AG04449 (cell line): ENCODE measurements at regions of chr22 and their contacts with region 1.

Region 1: GRCh38 chr22:50030297-50031188 is 18.0 kb upstream of the IL17REL start:
- DNase-seq: no peak
- H3K4me3 ChIP-seq: no peak overlapping the region
- CTCF ChIP-seq: peak; percentile 94

Region 2: DNA sequence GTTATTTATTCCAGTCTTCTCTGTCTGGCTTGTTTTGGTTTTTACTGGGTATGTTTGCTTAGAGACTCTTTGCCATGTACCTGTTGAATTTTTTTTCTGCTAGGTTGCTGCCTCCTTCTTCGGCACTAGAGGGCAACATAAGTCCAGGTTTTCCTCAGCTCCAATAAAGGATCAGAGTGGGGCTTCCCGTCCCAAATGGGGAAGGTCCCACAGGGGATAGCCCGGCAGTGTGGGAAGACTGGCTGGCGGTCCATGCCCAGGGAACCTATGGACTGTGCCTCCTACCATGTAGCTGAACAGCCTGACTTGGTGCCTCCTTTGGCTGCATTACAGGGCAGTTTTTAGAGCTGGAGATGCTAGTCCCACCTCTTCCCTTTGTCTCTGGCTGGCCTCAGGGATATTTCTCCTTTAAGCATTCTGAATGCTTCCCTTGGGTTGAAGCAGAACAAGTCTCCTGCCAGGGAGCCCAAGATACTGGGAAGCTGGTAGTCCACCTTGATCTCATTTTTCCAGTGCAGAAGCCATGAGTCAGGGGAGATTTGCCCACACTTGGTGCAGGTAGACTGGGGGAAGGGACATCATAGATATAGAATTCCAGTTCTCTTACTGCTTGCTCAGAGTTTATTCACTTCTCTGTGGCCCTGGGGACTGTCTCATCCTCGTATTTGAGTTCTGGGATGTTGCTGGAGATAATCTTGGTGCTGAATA is 263.0 kb before region 1 on chr22:
- CTCF ChIA-PET with region 1: interaction called, 15 read pairs
- POLR2A ChIA-PET with region 1: no interaction called
- DNase-seq: no peak
- H3K4me3 ChIP-seq: no peak overlapping the region
- CTCF ChIP-seq: peak; percentile 55

Region 3: GRCh38 chr22:49925525-49926128 is 104.9 kb before region 1 on chr22:
- CTCF ChIA-PET with region 1: interaction called, 165 read pairs
- POLR2A ChIA-PET with region 1: no interaction called
- DNase-seq: no peak
- H3K4me3 ChIP-seq: no peak overlapping the region
- CTCF ChIP-seq: no peak

Region 4: DNA sequence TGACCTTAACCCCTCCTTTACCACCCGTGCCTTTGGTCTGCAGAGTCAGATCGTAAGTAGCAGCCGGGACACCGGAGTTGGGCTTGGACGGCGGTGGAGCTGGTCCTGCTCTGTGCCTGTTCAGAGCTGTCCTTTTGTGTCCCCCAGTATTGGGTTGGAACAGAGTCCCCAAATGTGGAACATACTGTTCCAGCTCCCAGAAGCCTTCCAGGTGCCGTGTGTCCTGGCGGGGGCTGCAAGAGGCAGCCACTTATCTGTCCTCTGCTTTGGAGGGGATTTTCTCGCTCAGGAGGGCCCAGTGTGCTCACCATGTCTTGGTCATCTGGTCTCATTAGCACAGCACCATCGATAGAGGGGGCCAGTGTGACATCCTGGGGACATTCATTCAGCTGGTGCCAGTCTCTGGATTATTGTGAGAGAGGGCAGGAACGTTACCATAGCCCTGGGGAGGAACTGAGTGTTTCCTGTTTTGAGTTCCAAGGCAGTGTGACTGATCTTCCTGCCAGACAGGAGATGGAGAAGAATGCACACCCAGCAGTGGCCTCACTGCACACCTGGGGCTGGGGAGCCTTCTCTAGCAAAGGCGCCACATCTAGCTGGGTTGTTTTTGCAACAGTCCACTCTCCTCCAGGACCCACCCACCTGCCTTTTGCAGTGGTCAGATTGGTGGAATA is 99.7 kb before region 1 on chr22:
- CTCF ChIA-PET with region 1: interaction called, 165 read pairs
- POLR2A ChIA-PET with region 1: no interaction called
- DNase-seq: no peak
- H3K4me3 ChIP-seq: no peak overlapping the region
- CTCF ChIP-seq: peak; percentile 64

Region 5: GRCh38 chr22:49979587-49980264 is 50.8 kb before region 1 on chr22:
- CTCF ChIA-PET with region 1: interaction called, 11 read pairs
- POLR2A ChIA-PET with region 1: no interaction called
- DNase-seq: no peak
- H3K4me3 ChIP-seq: no peak overlapping the region
- CTCF ChIP-seq: peak; percentile 54

Region 6: GRCh38 chr22:49992921-49993648 is 37.5 kb before region 1 on chr22:
- CTCF ChIA-PET with region 1: interaction called, 22 read pairs
- POLR2A ChIA-PET with region 1: no interaction called
- DNase-seq: no peak
- H3K4me3 ChIP-seq: no peak overlapping the region
- CTCF ChIP-seq: peak; percentile 89